Activated B cell treated with CpG ODN at 0.5 μM for 24 hours (primary cell): ENCODE measurements at regions of chr12 and their contacts with region 1.

Region 1: DNA sequence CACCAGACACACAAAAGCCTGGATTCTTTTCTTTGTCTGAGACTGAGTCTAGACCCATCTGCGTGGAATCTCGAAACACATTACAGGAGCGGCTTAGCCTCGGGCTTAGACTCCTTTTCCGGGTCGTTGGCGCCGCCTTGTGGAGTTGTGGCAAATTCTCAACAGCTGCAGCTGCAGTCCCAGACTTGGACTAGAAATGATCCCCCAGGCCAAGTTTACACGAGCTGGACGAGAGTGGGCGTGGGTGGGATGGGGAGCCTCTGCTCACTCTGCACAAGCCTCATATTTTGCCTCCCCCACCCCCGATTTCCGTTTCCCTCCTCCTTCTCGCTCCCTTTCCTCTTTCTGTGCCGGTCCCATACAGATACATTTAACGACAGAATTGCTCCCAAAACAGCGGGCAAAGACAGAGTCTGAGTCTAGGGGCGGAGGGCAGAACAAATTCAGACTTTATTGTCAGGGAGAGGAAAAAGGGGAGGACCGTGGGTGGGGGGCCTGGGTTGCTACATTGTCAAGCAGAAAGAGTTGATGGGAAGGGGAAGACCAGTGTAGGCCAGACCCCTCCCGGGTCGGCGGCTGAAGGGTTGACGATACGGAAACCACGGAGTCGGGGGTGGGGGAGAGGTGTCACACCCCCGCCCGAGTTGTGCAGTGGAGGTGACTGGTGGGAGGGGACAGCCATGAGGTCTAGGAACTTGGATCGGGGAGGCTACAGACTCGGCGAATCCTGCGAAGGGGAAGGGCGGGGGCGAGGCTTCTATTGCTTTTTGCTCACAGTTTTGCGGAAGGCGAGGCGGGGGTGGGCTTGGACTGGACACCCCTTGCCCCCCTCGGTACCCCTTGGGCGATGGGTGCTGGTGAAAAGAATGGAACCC is 4.7 kb upstream of the GPR84 start:
- DNase-seq: peak; percentile 78
- ATAC-seq: peak; percentile 95
- H3K4me3 Mint-ChIP-seq: peak overlapping the region; percentile 55
- H3K27ac Mint-ChIP-seq: no peak overlapping the region
- H3K4me1 Mint-ChIP-seq: peaks cover 22% of the 10 kb centered on the region
- H3K27me3 Mint-ChIP-seq: no peaks in the 10 kb centered on the region
- CTCF ChIP-seq: peak; percentile 60

Region 2: DNA sequence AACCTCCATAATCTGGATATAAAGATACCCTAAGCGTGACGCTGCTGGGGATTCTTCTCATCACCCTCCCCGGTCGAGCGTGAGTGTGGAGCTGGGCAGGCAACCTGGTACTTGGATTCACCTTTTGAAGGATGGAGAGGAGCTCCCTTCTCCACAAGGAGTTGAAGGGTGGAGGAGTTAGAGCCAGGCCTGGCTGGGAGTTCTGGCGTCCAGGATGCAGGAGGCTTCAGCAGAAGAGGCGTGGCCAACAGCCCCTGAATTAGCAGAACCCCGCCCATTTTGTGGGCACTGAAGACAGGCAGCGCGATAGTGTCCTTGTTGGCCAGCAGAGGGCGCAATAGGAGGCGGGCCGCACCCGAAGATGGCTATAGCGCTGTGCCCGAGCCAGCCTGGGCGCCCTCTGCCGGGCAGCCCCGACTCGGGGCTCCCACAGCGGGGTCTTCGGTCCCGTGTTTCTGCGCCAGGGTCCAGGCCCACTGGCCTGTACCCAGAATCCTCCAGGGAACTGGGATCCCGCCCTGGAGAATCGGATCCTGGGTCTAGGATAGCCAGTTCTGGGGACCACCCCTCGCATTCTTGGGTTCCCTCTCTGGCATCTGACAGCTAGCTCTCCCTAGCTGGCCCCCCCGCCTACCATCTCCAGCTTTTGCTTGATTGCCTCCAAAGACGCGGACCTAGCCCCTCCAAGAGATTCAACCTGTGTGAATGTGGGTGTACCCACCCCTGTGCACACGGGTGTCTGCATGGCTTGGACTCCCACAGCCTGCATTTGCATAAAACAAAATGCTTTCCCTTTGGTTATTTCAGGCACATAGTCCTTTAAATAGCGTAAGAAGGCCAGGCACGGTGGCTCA is 154.2 kb before region 1 on chr12:
- CTCF ChIA-PET with region 1: interaction called, 11 read pairs
- POLR2A ChIA-PET with region 1: interaction called, 3 read pairs
- intact Hi-C with region 1: loop called (anchors 1 kb)
- DNase-seq: peak; percentile 87
- ATAC-seq: peak; percentile 85
- H3K4me3 Mint-ChIP-seq: peak overlapping the region; percentile 83
- H3K27ac Mint-ChIP-seq: no peak overlapping the region
- H3K4me1 Mint-ChIP-seq: peaks cover 45% of the 10 kb centered on the region
- H3K27me3 Mint-ChIP-seq: peaks cover 5% of the 10 kb centered on the region
- CTCF ChIP-seq: peak; percentile 97

Region 3: GRCh38 chr12:54220092-54220557 is 148.8 kb before region 1 on chr12:
- CTCF ChIA-PET with region 1: interaction called, 11 read pairs
- POLR2A ChIA-PET with region 1: interaction called, 3 read pairs
- intact Hi-C with region 1: loop called (anchors 1 kb)
- DNase-seq: peak; percentile 58
- ATAC-seq: peak; percentile 49
- H3K4me3 Mint-ChIP-seq: no peak overlapping the region
- H3K27ac Mint-ChIP-seq: no peak overlapping the region
- H3K4me1 Mint-ChIP-seq: peaks cover 35% of the 10 kb centered on the region
- H3K27me3 Mint-ChIP-seq: no peaks in the 10 kb centered on the region
- CTCF ChIP-seq: no peak

Region 4: GRCh38 chr12:54251667-54252284 is 117.2 kb before region 1 on chr12:
- CTCF ChIA-PET with region 1: interaction called, 13 read pairs
- POLR2A ChIA-PET with region 1: interaction called, 6 read pairs
- intact Hi-C with region 1: loop called (anchors 1 kb)
- DNase-seq: no peak
- ATAC-seq: peak; percentile 74
- H3K4me3 Mint-ChIP-seq: no peak overlapping the region
- H3K27ac Mint-ChIP-seq: no peak overlapping the region
- H3K4me1 Mint-ChIP-seq: peaks cover 7% of the 10 kb centered on the region
- H3K27me3 Mint-ChIP-seq: no peaks in the 10 kb centered on the region
- CTCF ChIP-seq: peak; percentile 30

Region 5: GRCh38 chr12:54294152-54294952 is 74.6 kb before region 1 on chr12:
- CTCF ChIA-PET with region 1: interaction called, 11 read pairs
- POLR2A ChIA-PET with region 1: no interaction called
- intact Hi-C with region 1: loop called (anchors 1 kb)
- DNase-seq: no peak
- ATAC-seq: peak; percentile 79
- H3K4me3 Mint-ChIP-seq: no peak overlapping the region
- H3K27ac Mint-ChIP-seq: no peak overlapping the region
- H3K4me1 Mint-ChIP-seq: peaks cover 12% of the 10 kb centered on the region
- H3K27me3 Mint-ChIP-seq: peaks cover 12% of the 10 kb centered on the region
- CTCF ChIP-seq: no peak

Region 6: GRCh38 chr12:54337280-54337842 is 31.6 kb before region 1 on chr12:
- CTCF ChIA-PET with region 1: interaction called, 22 read pairs
- POLR2A ChIA-PET with region 1: no interaction called
- intact Hi-C with region 1: loop called (anchors 1 kb)
- DNase-seq: no peak
- ATAC-seq: no peak
- H3K4me3 Mint-ChIP-seq: no peak overlapping the region
- H3K27ac Mint-ChIP-seq: no peak overlapping the region
- H3K4me1 Mint-ChIP-seq: peaks cover 9% of the 10 kb centered on the region
- H3K27me3 Mint-ChIP-seq: no peaks in the 10 kb centered on the region
- CTCF ChIP-seq: no peak

Region 7: DNA sequence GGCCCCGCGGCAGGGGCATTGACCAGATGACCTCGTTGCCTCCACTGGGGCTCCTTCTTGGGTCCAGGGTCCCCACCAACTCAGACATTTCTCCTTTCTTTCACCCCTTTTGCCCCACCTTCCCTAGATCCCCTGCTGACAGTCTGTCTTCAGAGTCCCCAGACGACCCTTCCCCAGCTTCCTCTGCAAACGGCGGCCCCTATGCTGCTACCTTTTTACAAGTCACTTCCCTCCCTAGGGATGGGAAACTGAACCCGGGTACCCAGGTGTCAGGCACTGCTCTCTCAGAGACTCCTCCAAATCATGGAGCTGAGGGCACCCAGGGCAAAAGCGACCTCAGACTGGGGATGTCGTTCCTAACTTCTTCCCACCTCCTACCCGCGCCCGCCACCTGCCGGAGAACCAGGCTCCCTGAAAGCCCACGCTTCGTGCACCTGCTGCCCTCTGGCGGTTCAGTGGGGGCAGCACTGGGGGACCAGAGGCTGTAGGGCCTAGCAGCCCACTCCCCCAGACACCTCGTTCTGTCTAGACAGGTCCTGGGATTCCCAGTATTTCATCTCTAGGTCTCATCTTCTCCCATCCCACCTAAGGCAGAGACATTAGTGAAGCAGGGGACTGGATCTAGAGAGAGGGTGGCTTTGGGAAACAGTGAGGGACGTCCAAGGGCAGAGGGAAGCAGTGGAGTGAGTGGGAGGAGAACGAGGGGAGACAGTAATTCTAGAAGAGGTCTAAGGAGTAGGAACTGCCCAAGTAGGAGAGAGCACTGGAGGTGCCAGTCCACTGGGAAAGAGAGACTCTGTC is 10.7 kb after region 1 on chr12:
- CTCF ChIA-PET with region 1: interaction called, 15 read pairs
- POLR2A ChIA-PET with region 1: interaction called, 3 read pairs
- intact Hi-C with region 1: loop called (anchors 1 kb)
- DNase-seq: peak; percentile 84
- ATAC-seq: peak; percentile 92
- H3K4me3 Mint-ChIP-seq: peak overlapping the region; percentile 65
- H3K27ac Mint-ChIP-seq: peak overlapping the region; percentile 24
- H3K4me1 Mint-ChIP-seq: peaks cover 38% of the 10 kb centered on the region
- H3K27me3 Mint-ChIP-seq: no peaks in the 10 kb centered on the region
- CTCF ChIP-seq: peak; percentile 99